Left ventricle myocardium inferior (tissue), 1 donor: ENCODE measurements at regions of chr7 and their contacts with region 1.

Region 1: DNA sequence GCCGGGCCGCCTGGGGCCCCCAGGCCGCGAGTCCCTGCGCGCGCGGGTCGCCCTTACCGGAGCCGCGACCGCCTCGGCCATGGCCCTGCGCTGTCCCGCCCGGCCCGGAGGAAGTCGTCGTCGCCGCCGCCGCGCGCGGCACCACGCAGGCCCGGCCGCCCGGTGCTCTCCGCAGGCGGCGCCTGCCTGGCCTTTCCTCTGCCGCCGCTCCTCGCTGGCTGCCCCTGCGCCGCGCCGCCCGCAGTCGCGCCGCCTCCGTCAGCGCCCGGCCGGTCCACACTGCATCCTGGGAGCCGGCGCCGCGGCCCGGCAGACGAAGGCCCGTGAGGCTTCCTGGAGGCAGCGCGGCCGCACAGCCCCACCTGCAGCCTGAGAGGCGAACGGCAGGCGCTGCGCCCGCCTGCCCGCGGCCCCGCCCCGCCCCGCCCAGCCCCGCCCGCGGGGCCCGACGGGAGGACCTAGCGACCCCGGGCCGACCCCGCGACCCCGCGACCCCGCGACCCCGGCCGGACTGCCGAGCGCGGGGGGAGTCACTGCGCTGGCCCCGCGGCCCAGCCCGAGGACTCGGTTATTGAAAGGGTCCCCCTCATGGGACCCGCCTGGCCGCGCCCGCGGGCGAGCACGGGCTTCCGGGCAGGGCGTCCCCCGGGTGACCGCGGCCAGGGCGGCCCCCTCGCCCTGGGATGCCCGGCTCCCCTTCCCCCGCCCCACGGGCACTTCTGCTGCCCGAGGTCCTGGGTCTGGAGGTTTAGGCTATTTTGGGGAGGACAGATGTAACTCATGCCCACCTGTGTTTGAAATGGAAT is at the start of gene ZNF746:
- DNase-seq: peak; percentile 86
- H3K4me3 ChIP-seq: peak within 1 kb of the TSS; percentile 83
- H3K27ac ChIP-seq: peak within 1 kb of the TSS; percentile 89
- H3K4me1 ChIP-seq: peaks cover 33% of the 10 kb centered on the region
- H3K27me3 ChIP-seq: no peaks in the 10 kb centered on the region
- CTCF ChIP-seq: peak; percentile 73
- total RNA-seq, gene ZNF746: 7.4 TPM

Region 2: DNA sequence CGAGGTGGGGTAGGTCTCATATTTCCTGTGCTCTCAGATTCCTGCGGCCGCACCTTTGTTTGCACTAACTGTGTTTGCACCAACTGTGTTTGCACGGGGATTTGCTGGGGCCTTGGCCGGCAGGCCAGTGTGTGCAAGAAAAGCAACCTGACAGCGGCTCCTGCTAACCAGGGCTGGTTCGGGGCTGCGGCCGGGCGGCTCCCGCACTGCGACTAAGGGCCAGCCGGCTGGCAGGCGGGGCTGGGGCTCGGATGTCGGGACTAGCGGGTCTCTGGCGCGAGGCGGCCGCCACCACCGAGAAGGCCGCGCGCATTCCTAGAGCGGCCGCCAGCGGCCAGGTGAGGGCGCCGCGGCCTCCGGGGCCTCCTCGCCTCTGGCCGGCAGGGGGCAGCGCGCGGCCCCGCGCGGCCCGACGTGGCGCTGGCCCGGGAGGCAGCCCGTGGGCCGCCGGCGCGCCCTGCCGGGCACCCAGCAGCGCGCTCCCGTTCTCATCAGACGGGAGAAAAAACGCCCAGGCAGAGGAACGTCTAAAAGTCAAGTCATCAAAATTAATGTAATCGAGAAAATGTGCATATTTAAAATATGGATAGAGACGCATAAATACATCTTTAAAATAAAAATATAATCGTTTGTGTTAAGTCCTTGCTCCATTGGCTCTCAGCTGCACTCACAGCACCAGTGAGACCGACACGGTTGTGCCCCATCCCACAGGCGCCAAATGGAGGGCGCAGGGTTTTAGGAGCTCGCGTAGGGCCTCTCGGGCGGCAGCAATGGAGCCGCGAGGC is 75.3 kb before region 1 on chr7:
- intact Hi-C with region 1: loop called (anchors 5 kb)
- DNase-seq: peak; percentile 60
- H3K4me3 ChIP-seq: peak overlapping the region; percentile 68
- H3K27ac ChIP-seq: peak overlapping the region; percentile 42
- H3K4me1 ChIP-seq: peaks cover 17% of the 10 kb centered on the region
- H3K27me3 ChIP-seq: no peaks in the 10 kb centered on the region
- CTCF ChIP-seq: peak; percentile 68

Region 3: DNA sequence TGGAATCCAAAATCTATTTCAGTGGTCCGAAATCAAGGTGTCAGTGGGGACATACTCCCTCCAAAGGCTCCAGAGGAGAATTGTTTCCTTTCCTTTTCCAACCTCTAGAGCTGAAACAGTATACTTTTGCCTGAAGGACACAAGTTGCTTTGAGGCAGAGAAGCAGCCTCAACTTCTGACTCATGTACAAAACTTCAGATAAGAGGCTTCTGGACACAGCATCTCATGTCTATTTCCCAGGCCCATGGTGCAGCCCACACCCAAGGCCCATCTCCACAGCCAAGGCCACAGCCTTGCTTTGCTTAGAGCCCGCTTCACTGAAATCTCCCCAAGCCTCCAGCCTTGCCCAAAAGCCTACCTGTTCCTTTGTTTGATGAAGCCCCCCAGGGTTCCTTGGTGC is 206.8 kb after region 1 on chr7:
- intact Hi-C with region 1: no loop called
- DNase-seq: no peak
- H3K4me3 ChIP-seq: no peak overlapping the region
- H3K27ac ChIP-seq: no peak overlapping the region
- H3K4me1 ChIP-seq: no peaks in the 10 kb centered on the region
- H3K27me3 ChIP-seq: peaks cover 11% of the 10 kb centered on the region
- CTCF ChIP-seq: no peak